Panc1 (cell line): ENCODE measurements at regions of chr11 and their contacts with region 1.

Region 1: DNA sequence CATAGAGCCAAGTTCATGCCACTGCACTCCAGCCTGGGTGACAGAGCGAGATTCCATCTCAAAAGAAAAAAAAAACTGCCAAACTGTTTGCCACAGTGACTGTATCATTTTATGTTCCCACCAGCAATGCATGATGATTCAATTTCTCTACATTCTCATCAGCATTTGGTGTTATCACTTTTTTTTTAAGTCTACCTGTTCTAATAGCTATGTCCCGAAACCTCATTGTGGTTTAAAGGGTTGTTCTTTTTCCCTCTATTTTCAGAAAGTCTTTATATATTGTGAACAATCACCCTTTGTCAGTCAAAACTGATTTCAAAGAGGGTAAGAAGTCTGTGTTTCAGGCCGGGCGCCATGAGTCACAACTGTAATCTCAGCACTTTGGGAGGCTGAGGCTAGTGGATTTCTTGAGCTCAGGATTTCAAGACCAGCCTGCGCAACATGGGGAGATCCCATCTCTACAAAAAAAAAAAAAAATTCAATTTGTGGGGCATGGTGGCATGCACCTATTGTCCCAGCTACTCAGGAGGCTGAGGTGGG is 14.8 kb upstream of the FAM168A start:
- DNase-seq: no peak
- ATAC-seq: no peak
- H3K4me3 ChIP-seq: no peak overlapping the region
- H3K27ac ChIP-seq: no peak overlapping the region
- H3K4me1 ChIP-seq: no peaks in the 10 kb centered on the region
- H3K27me3 ChIP-seq: no peaks in the 10 kb centered on the region
- CTCF ChIP-seq: no peak

Region 2: GRCh38 chr11:73498343-73498742 is 114.3 kb before region 1 on chr11:
- CTCF ChIA-PET with region 1: no interaction called
- POLR2A ChIA-PET with region 1: no interaction called
- in situ Hi-C with region 1: no loop called
- intact Hi-C with region 1: no loop called
- DNase-seq: no peak
- ATAC-seq: no peak
- H3K4me3 ChIP-seq: no peak overlapping the region
- H3K27ac ChIP-seq: no peak overlapping the region
- H3K4me1 ChIP-seq: no peaks in the 10 kb centered on the region
- H3K27me3 ChIP-seq: no peaks in the 10 kb centered on the region
- CTCF ChIP-seq: no peak

Region 3: GRCh38 chr11:73597956-73598718 is 14.5 kb before region 1 on chr11 and contains the start of gene FAM168A:
- CTCF ChIA-PET with region 1: no interaction called
- POLR2A ChIA-PET with region 1: interaction called, 10 read pairs
- in situ Hi-C with region 1: no loop called
- intact Hi-C with region 1: no loop called
- DNase-seq: peak; percentile 93
- ATAC-seq: peak; percentile 98
- H3K4me3 ChIP-seq: peak within 1 kb of the TSS; percentile 58 to 94
- H3K27ac ChIP-seq: peak within 1 kb of the TSS; percentile 86
- H3K4me1 ChIP-seq: peaks cover 24% of the 10 kb centered on the region
- H3K27me3 ChIP-seq: no peaks in the 10 kb centered on the region
- CTCF ChIP-seq: no peak
- total RNA-seq, gene FAM168A: 62.8 TPM

Region 4: DNA sequence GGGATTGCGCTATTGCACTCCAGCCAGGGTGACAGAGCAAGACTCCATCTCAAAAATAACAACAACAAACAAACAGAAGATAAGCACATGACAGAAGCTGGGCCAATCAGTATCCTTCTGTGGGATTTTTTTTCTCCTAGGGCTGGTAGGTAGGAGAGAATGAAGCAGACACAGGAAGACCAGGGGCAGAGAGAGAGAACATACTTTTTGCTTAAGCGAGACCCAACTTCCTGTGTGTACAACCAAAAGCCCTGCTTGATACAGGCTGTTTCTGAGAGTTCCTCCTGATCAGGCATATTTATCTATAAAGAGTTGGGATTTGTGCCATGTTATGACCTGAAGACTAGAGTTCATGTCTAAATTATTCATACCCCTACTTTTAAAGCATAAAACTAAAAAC is 21.3 kb after region 1 on chr11:
- CTCF ChIA-PET with region 1: no interaction called
- POLR2A ChIA-PET with region 1: interaction called, 18 read pairs
- in situ Hi-C with region 1: no loop called
- intact Hi-C with region 1: no loop called
- DNase-seq: no peak
- ATAC-seq: no peak
- H3K4me3 ChIP-seq: no peak overlapping the region
- H3K27ac ChIP-seq: no peak overlapping the region
- H3K4me1 ChIP-seq: no peaks in the 10 kb centered on the region
- H3K27me3 ChIP-seq: no peaks in the 10 kb centered on the region
- CTCF ChIP-seq: no peak

Region 5: GRCh38 chr11:73760679-73761402 is 148.2 kb after region 1 on chr11 and contains the start of gene RAB6A:
- CTCF ChIA-PET with region 1: no interaction called
- POLR2A ChIA-PET with region 1: no interaction called
- in situ Hi-C with region 1: no loop called
- intact Hi-C with region 1: no loop called
- DNase-seq: peak; percentile 95
- ATAC-seq: peak; percentile 95
- H3K4me3 ChIP-seq: peak within 1 kb of the TSS; percentile 58 to 85
- H3K27ac ChIP-seq: peak within 1 kb of the TSS; percentile 89
- H3K4me1 ChIP-seq: peaks cover 19% of the 10 kb centered on the region; the same call in 1 of the 2 replicates
- H3K27me3 ChIP-seq: no peaks in the 10 kb centered on the region; the same call in 1 of the 2 replicates
- CTCF ChIP-seq: no peak
- total RNA-seq, gene RAB6A: 149 TPM

Region 6: GRCh38 chr11:74123008-74123448 is 510.4 kb after region 1 on chr11:
- CTCF ChIA-PET with region 1: no interaction called
- POLR2A ChIA-PET with region 1: no interaction called
- in situ Hi-C with region 1: no loop called
- intact Hi-C with region 1: no loop called
- DNase-seq: no peak
- ATAC-seq: no peak
- H3K4me3 ChIP-seq: no peak overlapping the region
- H3K27ac ChIP-seq: no peak overlapping the region
- H3K4me1 ChIP-seq: no peaks in the 10 kb centered on the region
- H3K27me3 ChIP-seq: no peaks in the 10 kb centered on the region
- CTCF ChIP-seq: no peak